ENCODE measurements at regions of chr7 and their contacts with region 1.

Region 1: DNA sequence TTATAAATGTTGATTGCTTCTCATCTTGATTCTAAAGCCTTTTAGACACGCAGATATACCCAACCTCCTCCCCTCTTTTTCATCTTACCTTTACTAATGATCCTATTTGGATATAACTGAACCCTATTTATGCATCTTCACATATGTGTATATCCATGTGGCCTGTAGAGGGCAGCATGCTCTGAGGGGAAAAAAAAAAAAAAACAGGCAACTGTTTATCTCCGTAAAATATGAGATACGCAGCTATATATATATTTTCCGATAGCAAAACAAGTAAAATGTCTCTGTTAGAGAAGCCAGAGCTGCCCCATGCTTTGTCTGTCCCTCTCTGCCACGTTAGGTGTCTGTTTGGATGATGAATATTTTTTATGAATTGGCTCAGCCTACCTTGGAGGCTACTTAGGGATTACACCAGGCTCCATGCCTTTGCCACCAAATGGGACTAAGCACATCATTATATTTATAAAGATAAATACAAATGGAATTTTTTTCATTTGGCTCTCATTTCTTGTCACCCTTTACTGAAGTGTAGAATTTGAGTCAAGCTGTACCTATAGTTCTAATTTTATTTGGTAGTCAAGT is 174.8 kb upstream of the FZD1 start:
- DNase-seq: peak; percentile 60
- H3K4me3 ChIP-seq: peak overlapping the region in 1 of 3 experiments; percentile 7
- H3K27ac ChIP-seq: no peak overlapping the region
- H3K4me1 ChIP-seq: peaks cover 2% of the 10 kb centered on the region
- H3K27me3 ChIP-seq: no peaks in the 10 kb centered on the region
- CTCF ChIP-seq: peak; percentile 54 to 57
- POLR2A ChIP-seq: no peak

Region 2: DNA sequence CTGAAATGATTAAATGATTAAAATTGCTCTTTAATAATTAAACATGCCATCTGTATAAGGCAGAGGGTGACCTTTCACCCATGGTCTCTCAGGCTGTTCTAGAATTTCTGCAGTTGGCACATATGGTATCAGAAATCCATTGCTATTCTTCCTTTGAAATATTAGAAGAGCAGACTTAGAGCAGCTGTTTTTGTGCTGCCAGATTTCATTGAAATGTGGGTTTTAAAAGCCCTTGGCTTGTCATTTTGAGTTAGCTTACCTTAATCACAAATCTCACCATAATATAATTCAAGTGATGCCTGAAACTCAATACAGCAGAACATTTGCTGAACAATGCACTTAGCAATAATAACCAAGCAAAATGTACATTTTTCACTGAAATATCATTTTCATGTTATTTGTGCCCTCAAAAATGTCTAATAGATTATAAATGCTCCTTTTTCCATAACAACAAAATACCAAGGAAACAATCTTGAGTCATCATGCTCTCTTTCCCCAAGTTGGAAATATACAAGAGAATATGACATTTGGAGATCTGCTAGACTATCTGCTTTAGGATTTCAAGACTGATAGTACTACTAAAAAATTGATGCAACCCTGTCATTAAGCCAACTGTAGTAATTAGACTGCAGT is 636.1 kb before region 1 on chr7:
- CTCF ChIA-PET with region 1: no interaction called
- POLR2A ChIA-PET with region 1: no interaction called
- dilution Hi-C with region 1: no loop called
- intact Hi-C with region 1: no loop called
- DNase-seq: no peak
- H3K4me3 ChIP-seq: no peak overlapping the region
- H3K27ac ChIP-seq: no peak overlapping the region
- H3K4me1 ChIP-seq: no peaks in the 10 kb centered on the region
- H3K27me3 ChIP-seq: no peaks in the 10 kb centered on the region
- CTCF ChIP-seq: no peak
- POLR2A ChIP-seq: no peak

Region 3: GRCh38 chr7:91020636-91021385 is 68.7 kb before region 1 on chr7:
- CTCF ChIA-PET with region 1: no interaction called
- POLR2A ChIA-PET with region 1: no interaction called
- dilution Hi-C with region 1: no loop called
- intact Hi-C with region 1: no loop called
- DNase-seq: no peak
- H3K4me3 ChIP-seq: no peak overlapping the region
- H3K27ac ChIP-seq: no peak overlapping the region
- H3K4me1 ChIP-seq: no peaks in the 10 kb centered on the region
- H3K27me3 ChIP-seq: no peaks in the 10 kb centered on the region
- CTCF ChIP-seq: no peak
- POLR2A ChIP-seq: no peak

Region 4: DNA sequence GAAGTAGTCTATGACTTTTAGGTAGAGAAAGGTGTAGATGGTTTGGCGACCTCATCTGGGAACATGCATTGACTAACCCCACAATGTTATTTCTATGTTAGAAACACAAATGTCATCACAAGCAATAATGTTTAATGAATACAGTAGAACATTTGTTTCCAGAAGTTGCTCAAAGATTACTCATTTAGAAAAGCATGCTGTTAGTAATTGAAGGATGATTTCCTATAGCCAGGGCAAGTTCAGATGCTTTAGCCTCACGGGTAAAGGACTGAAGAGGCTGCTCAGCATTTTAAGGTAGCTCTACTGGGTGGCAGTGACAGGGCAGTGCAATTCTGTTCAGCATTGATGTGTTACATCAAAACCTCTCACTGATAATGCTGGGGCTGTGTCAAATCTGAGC is 24.5 kb before region 1 on chr7:
- CTCF ChIA-PET with region 1: no interaction called
- POLR2A ChIA-PET with region 1: no interaction called
- dilution Hi-C with region 1: no loop called
- intact Hi-C with region 1: no loop called
- DNase-seq: no peak
- H3K4me3 ChIP-seq: no peak overlapping the region
- H3K27ac ChIP-seq: no peak overlapping the region
- H3K4me1 ChIP-seq: no peaks in the 10 kb centered on the region
- H3K27me3 ChIP-seq: no peaks in the 10 kb centered on the region
- CTCF ChIP-seq: no peak
- POLR2A ChIP-seq: no peak

Region 5: GRCh38 chr7:91112902-91113341 is 23.4 kb after region 1 on chr7:
- CTCF ChIA-PET with region 1: no interaction called
- POLR2A ChIA-PET with region 1: no interaction called
- dilution Hi-C with region 1: no loop called
- intact Hi-C with region 1: no loop called
- DNase-seq: no peak
- H3K4me3 ChIP-seq: no peak overlapping the region
- H3K27ac ChIP-seq: no peak overlapping the region
- H3K4me1 ChIP-seq: no peaks in the 10 kb centered on the region
- H3K27me3 ChIP-seq: no peaks in the 10 kb centered on the region
- CTCF ChIP-seq: no peak
- POLR2A ChIP-seq: no peak

Region 6: DNA sequence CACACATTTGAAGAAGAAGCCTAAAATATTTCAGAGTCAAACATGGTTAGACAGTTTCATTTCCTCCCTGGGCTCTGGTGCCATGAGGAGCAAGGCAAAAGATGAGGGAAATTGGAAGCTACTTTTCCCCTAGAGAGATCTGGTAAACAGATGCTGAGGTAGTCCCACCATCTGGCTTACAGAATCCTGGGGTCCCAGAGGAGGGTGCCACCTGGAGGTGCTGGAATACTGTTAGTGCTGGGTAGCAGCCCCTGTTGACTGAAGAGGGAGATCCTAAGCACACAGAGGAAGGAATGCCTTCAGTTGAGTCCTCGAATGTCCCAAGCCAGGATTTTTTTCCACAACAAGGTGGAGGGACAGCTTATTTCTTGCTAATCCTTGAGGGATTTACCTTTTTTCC is 334.9 kb after region 1 on chr7:
- CTCF ChIA-PET with region 1: no interaction called
- POLR2A ChIA-PET with region 1: no interaction called
- dilution Hi-C with region 1: no loop called
- intact Hi-C with region 1: loop called (anchors 10 kb)
- DNase-seq: peak; percentile 13
- H3K4me3 ChIP-seq: no peak overlapping the region
- H3K27ac ChIP-seq: no peak overlapping the region
- H3K4me1 ChIP-seq: no peaks in the 10 kb centered on the region
- H3K27me3 ChIP-seq: peaks cover 2 to 3% of the 10 kb centered on the region in 2 experiments
- CTCF ChIP-seq: no peak
- POLR2A ChIP-seq: no peak

Region 7: DNA sequence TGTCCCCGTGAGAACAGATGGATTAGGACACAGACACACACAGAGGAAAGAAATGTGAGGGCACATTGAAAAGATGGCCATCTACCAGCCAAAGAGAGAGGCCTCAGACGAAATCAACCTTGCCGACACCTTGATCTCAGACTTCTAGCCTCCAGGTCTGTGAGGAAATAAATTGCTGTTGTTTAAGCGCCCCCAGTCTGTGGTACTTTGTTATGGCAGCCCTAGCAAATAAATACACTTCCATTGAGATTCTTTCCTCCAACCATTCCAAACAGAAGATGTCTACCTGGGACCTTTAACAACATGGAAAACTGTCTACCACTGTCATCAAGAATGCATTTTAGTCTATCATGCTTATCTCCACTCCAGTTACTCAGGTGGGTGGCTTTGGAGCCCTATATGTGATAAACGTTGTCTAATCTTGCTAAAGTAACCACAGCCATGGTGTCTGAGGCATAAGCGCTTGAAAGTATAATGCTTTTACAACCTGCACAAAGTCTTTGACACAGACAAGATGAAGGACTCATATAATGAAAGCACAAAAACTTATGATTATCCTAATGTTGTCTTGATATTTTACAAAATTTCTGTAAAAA is 546.8 kb after region 1 on chr7:
- CTCF ChIA-PET with region 1: interaction called, 21 read pairs
- POLR2A ChIA-PET with region 1: no interaction called
- dilution Hi-C with region 1: no loop called
- intact Hi-C with region 1: loop called (anchors 1 kb)
- DNase-seq: peak; percentile 57
- H3K4me3 ChIP-seq: no peak overlapping the region
- H3K27ac ChIP-seq: no peak overlapping the region
- H3K4me1 ChIP-seq: peaks cover 6% of the 10 kb centered on the region
- H3K27me3 ChIP-seq: peaks cover 0 to 3% of the 10 kb centered on the region in 2 experiments
- CTCF ChIP-seq: peak; percentile 58 to 65
- POLR2A ChIP-seq: no peak

Region 8: GRCh38 chr7:91784463-91784862 is 695.0 kb after region 1 on chr7:
- CTCF ChIA-PET with region 1: interaction called, 32 read pairs
- POLR2A ChIA-PET with region 1: no interaction called
- dilution Hi-C with region 1: no loop called
- intact Hi-C with region 1: loop called (anchors 1 kb)
- DNase-seq: peak; percentile 37
- H3K4me3 ChIP-seq: no peak overlapping the region
- H3K27ac ChIP-seq: no peak overlapping the region
- H3K4me1 ChIP-seq: no peaks in the 10 kb centered on the region
- H3K27me3 ChIP-seq: peaks cover 3 to 8% of the 10 kb centered on the region in 2 experiments
- CTCF ChIP-seq: peak in 1 of 2 donors; percentile 9
- POLR2A ChIP-seq: no peak

Region 9: GRCh38 chr7:91852263-91852741 is 762.8 kb after region 1 on chr7:
- CTCF ChIA-PET with region 1: no interaction called
- POLR2A ChIA-PET with region 1: no interaction called
- dilution Hi-C with region 1: no loop called
- intact Hi-C with region 1: loop called (anchors 2 kb)
- DNase-seq: peak; percentile 48
- H3K4me3 ChIP-seq: no peak overlapping the region
- H3K27ac ChIP-seq: no peak overlapping the region
- H3K4me1 ChIP-seq: no peaks in the 10 kb centered on the region
- H3K27me3 ChIP-seq: no peaks in the 10 kb centered on the region
- CTCF ChIP-seq: peak in 1 of 2 donors; percentile 29
- POLR2A ChIP-seq: no peak